ENCODE measurements at regions of chr18 and their contacts with region 1.

Region 1: DNA sequence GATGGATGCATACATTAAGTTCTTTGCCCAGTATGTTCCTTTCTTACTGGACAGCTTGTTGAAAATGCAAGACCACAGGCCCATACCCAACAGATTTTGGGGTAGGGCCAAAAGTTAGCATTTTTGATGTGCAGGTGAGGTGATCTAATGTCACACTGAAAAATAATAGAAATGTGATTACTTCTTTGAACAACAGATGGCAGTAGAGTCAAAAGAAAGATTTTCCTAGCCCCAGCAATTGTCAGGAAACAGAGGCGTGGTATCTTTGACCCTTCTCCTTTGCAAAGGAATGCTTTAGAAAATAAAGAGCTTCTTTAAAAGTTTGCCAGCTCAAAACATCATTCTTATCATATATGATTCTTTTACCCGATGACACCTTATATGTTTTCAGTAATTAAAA is 343.6 kb upstream of the SYT4 start:
- DNase-seq: peak in 2 of 4 experiments; percentile 1 to 7
- ATAC-seq: no peak
- H3K4me3 ChIP-seq: no peak overlapping the region
- H3K27ac ChIP-seq: no peak overlapping the region
- H3K4me1 ChIP-seq: no peaks in the 10 kb centered on the region
- H3K27me3 ChIP-seq: no peaks in the 10 kb centered on the region
- CTCF ChIP-seq: peak in 2 of 3 experiments; percentile 20 to 46; a peak in 1 of 6 replicates
- EP300 ChIP-seq: no peak
- POLR2A ChIP-seq: no peak
- RAD21 ChIP-seq: peak; percentile 40 to 59

Region 2: GRCh38 chr18:45212181-45213039 is 1591.5 kb after region 1 on chr18:
- CTCF ChIA-PET with region 1: no interaction called
- POLR2A ChIA-PET with region 1: no interaction called
- in situ Hi-C with region 1: no loop called
- intact Hi-C with region 1: loop called (anchors 10 kb)
- DNase-seq: peak; percentile 41 to 68 (median 44)
- ATAC-seq: peak; percentile 97
- H3K4me3 ChIP-seq: no peak overlapping the region
- H3K27ac ChIP-seq: no peak overlapping the region
- H3K4me1 ChIP-seq: no peaks in the 10 kb centered on the region
- H3K27me3 ChIP-seq: no peaks in the 10 kb centered on the region
- CTCF ChIP-seq: peak; percentile 93 to 100 (median 100)
- EP300 ChIP-seq: no peak
- POLR2A ChIP-seq: no peak
- RAD21 ChIP-seq: peak; percentile 69 to 75

Region 3: GRCh38 chr18:45384137-45384961 is 1763.4 kb after region 1 on chr18:
- CTCF ChIA-PET with region 1: interaction called, 3 read pairs
- POLR2A ChIA-PET with region 1: no interaction called
- in situ Hi-C with region 1: no loop called
- intact Hi-C with region 1: loop called (anchors 10 kb)
- DNase-seq: peak; percentile 54 to 65 (median 59)
- ATAC-seq: peak; percentile 88
- H3K4me3 ChIP-seq: no peak overlapping the region
- H3K27ac ChIP-seq: no peak overlapping the region
- H3K4me1 ChIP-seq: no peaks in the 10 kb centered on the region
- H3K27me3 ChIP-seq: no peaks in the 10 kb centered on the region
- CTCF ChIP-seq: peak; percentile 46 to 62 (median 48); a peak in 5 of 6 replicates
- EP300 ChIP-seq: no peak
- POLR2A ChIP-seq: no peak
- RAD21 ChIP-seq: peak; percentile 54 to 60